ENCODE measurements at regions of chr17 and their contacts with region 1.

Region 1: GRCh38 chr17:49763735-49764558 is at the start of gene FAM117A:
- DNase-seq: peak; percentile 90 to 99 (median 98)
- H3K4me3 ChIP-seq: peak within 1 kb of the TSS; percentile 82
- H3K4me3 Mint-ChIP-seq: peak within 1 kb of the TSS; percentile 82 to 100 (median 98)
- H3K27ac ChIP-seq: peak within 1 kb of the TSS; percentile 66
- H3K27ac Mint-ChIP-seq: peak within 1 kb of the TSS; percentile 43 to 99 (median 96)
- H3K4me1 ChIP-seq: peaks cover 39% of the 10 kb centered on the region
- H3K4me1 Mint-ChIP-seq: peaks cover 47 to 56% (median 51%) of the 10 kb centered on the region in 3 donors
- H3K27me3 ChIP-seq: no peaks in the 10 kb centered on the region
- H3K27me3 Mint-ChIP-seq: peaks cover 0 to 3% of the 10 kb centered on the region in 2 donors
- total RNA-seq, gene FAM117A: 21.8 to 24.8 TPM

Region 2: GRCh38 chr17:49739641-49740271 is 24.2 kb before region 1 on chr17:
- CTCF ChIA-PET with region 1: interaction called, 37 read pairs
- POLR2A ChIA-PET with region 1: interaction called, 53 read pairs
- DNase-seq: peak; percentile 94 to 99 (median 97)
- H3K4me3 ChIP-seq: peak overlapping the region; percentile 81
- H3K4me3 Mint-ChIP-seq: peak overlapping the region; percentile 90 to 98 (median 95)
- H3K27ac ChIP-seq: peak overlapping the region; percentile 88
- H3K27ac Mint-ChIP-seq: peak overlapping the region; percentile 97 to 100 (median 100)
- H3K4me1 ChIP-seq: peaks cover 95% of the 10 kb centered on the region
- H3K4me1 Mint-ChIP-seq: peaks cover 86 to 97% (median 93%) of the 10 kb centered on the region in 3 donors
- H3K27me3 ChIP-seq: no peaks in the 10 kb centered on the region
- H3K27me3 Mint-ChIP-seq: no peaks in the 10 kb centered on the region

Region 3: DNA sequence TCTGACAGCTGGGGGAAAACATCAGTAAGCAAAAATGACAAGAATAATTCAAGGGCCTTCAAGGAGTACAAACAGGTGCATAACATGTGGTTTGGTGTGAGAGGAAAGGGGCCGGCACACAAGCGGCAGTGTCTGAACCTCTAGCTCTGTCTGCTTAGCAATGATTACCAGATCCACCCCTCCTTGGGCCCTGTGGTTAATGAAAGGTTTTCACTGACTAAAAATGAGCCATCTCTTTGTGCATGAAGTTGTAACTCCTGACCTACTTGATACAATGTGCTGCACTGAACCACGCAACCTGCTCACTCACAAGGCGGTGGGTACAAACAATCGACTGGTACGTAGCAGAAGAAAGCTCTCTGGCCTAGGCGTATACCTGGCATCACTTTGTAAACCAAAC is 15.2 kb before region 1 on chr17:
- CTCF ChIA-PET with region 1: interaction called, 37 read pairs
- POLR2A ChIA-PET with region 1: interaction called, 70 read pairs
- DNase-seq: peak; percentile 49 to 80 (median 60)
- H3K4me3 ChIP-seq: peak overlapping the region; percentile 26
- H3K4me3 Mint-ChIP-seq: peak overlapping the region; percentile 73 to 83 (median 82)
- H3K27ac ChIP-seq: peak overlapping the region; percentile 52
- H3K27ac Mint-ChIP-seq: peak overlapping the region; percentile 94 to 99 (median 97)
- H3K4me1 ChIP-seq: peaks cover 90% of the 10 kb centered on the region
- H3K4me1 Mint-ChIP-seq: peaks cover 80 to 93% (median 92%) of the 10 kb centered on the region in 3 donors
- H3K27me3 ChIP-seq: no peaks in the 10 kb centered on the region
- H3K27me3 Mint-ChIP-seq: no peaks in the 10 kb centered on the region

Region 4: DNA sequence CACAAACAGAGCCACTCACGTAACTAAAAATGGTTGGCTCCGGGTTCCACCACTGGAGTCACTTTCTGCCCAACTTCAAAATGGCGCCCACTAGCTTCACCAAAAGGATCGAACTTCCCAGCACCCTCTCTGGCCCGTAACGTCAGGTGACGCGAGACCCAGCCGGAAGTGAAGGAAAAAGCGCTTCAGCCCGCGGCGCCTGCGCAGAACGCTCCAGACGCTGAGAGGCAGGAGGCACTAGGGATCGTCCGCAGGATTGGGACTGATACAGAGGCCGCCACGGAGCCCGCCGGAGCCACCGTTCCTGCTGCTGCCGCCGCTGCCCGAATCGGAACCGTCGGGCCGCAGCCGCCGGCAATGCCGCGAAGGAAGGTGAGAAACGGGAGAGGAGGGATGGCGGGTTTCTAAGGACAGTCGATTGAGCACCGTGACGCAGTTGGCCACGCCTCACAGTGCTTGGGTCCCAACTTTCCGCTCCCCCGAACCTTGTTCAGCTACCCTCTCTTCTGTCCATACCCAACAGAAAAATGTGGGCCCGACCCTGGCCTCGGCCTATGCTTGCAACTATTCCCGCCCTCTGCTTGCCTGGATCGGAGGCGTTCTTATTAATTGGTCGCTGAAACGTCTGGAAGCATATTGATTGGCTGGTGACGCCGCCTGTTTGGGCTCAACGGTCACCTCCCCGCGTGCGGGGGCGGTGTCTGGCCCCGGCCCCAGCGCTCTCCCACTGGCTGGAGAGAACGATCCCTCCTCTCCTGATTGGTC is 24.7 kb after region 1 on chr17 and contains the start of gene KAT7:
- CTCF ChIA-PET with region 1: interaction called, 14 read pairs
- POLR2A ChIA-PET with region 1: interaction called, 8 read pairs
- DNase-seq: peak; percentile 97 to 99 (median 99)
- H3K4me3 ChIP-seq: peak within 1 kb of the TSS; percentile 93
- H3K4me3 Mint-ChIP-seq: peak within 1 kb of the TSS; percentile 91 to 100 (median 96)
- H3K27ac ChIP-seq: peak within 1 kb of the TSS; percentile 98
- H3K27ac Mint-ChIP-seq: peak within 1 kb of the TSS; percentile 90 to 100 (median 98)
- H3K4me1 ChIP-seq: peaks cover 33% of the 10 kb centered on the region
- H3K4me1 Mint-ChIP-seq: peaks cover 50 to 60% (median 59%) of the 10 kb centered on the region in 3 donors
- H3K27me3 ChIP-seq: no peaks in the 10 kb centered on the region
- H3K27me3 Mint-ChIP-seq: no peaks in the 10 kb centered on the region
- total RNA-seq, gene KAT7: 66.1 to 75.8 TPM

Region 5: GRCh38 chr17:49899191-49899485 is 135.2 kb after region 1 on chr17:
- CTCF ChIA-PET with region 1: no interaction called
- POLR2A ChIA-PET with region 1: no interaction called
- DNase-seq: no peak
- H3K4me3 ChIP-seq: no peak overlapping the region
- H3K4me3 Mint-ChIP-seq: no peak overlapping the region
- H3K27ac ChIP-seq: no peak overlapping the region
- H3K27ac Mint-ChIP-seq: no peak overlapping the region
- H3K4me1 ChIP-seq: no peaks in the 10 kb centered on the region
- H3K4me1 Mint-ChIP-seq: peaks cover 0 to 1% (median 0%) of the 10 kb centered on the region in 3 donors
- H3K27me3 ChIP-seq: peaks cover 25% of the 10 kb centered on the region
- H3K27me3 Mint-ChIP-seq: peaks cover 62 to 85% of the 10 kb centered on the region in 2 donors

Measured in CD8-positive, alpha-beta memory T cell (primary cell).